ENCODE measurements at regions of chr14 and their contacts with region 1.

Region 1: DNA sequence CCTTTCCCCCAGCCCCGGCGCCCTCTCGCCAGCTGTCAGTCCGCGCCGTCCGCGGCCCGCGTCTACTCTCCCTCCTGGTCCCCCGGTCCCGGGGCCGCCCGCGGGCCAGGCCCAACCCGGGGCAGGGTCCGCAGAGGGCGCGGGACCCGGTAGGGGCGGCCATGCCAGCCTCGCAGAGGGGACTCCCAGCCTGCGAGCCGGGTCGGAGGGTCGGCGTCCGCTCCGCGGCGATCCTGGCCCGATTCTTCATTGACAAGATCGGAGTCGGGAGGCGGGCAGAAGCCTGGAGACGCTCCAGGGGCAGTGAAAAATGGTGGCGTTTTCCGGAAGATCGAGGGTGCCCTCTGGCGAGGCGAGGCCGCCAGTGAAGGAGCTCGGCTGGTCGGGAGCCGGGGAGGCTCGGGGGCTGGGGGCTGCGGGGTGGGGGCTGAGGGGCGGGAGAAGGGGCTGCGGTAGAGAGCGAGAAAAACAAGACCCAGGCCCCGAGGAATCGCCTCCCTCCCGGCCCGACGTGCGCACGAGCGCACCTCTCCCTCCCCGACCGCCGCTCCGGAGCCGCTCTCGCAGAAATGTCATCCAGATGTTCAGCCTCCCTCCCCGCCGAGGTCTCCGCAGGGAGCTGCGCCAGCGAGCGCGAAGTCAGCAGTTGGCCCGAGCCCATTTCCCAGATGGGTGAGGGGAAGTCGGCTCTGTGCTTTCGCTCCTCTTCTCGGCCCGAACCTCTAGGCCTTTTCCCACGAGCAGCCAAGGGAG is 647 bp upstream of the TGFB3 start:
- DNase-seq: peak; percentile 71 to 96
- H3K4me3 ChIP-seq: peak overlapping the region; percentile 85
- H3K27ac ChIP-seq: no peak overlapping the region
- H3K4me1 ChIP-seq: peaks cover 37% of the 10 kb centered on the region
- H3K27me3 ChIP-seq: no peaks in the 10 kb centered on the region
- CTCF ChIP-seq: peak; percentile 79

Region 2: DNA sequence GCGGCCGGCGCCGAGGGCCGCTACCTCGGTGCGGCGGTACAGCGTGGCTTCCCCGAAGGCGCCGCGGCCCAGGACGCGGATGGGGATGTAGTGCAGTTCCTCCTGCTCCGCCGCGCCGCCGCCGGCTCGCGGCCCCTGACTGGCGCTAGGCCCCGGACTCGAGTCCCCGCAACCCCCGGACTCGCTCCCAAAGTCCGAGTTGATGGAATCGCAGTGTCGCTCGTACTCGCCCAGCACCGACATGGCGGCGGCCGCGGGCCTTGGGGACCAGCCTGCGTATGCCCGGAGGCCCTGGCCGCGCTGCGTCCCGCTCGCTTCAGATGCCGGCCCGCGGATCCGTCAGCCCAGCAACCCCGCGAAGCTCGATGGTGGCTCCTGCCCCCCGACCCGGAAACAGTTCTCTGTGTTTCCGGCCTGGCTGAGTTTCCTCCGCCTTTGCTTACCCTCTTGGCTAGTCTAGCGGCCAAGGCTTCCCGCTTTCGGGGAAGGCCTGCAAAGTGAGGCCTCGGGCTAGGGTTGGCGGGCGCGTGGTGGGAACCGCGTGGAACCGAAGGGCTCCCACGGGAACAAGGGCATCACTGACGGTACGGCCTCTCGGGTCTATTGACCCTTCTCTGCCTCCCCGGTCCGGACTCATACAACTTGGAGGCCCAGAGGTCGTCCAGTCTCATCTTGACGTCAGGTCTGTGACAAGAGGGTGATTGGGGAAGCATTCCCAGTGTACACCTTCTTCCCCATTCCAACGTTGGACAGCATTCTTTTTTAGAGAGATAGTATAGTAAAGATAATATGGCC is 855.6 kb before region 1 on chr14 and contains the start of gene NEK9:
- CTCF ChIA-PET with region 1: no interaction called
- POLR2A ChIA-PET with region 1: interaction called, 5 read pairs
- intact Hi-C with region 1: loop called (anchors 2 kb)
- DNase-seq: peak; percentile 88 to 98
- H3K4me3 ChIP-seq: peak within 1 kb of the TSS; percentile 64
- H3K27ac ChIP-seq: peak within 1 kb of the TSS; percentile 85
- H3K4me1 ChIP-seq: peaks cover 47% of the 10 kb centered on the region
- H3K27me3 ChIP-seq: no peaks in the 10 kb centered on the region
- CTCF ChIP-seq: no peak
- total RNA-seq, gene NEK9: 170 and 174 TPM in 2 replicates

Region 3: GRCh38 chr14:75522224-75522982 is 460.0 kb before region 1 on chr14 and contains the start of gene BATF:
- CTCF ChIA-PET with region 1: interaction called, 16 read pairs
- POLR2A ChIA-PET with region 1: interaction called, 5 read pairs
- intact Hi-C with region 1: no loop called
- DNase-seq: peak; percentile 69 to 74
- H3K4me3 ChIP-seq: peak within 1 kb of the TSS; percentile 68
- H3K27ac ChIP-seq: peak within 1 kb of the TSS; percentile 93
- H3K4me1 ChIP-seq: peaks cover 60% of the 10 kb centered on the region
- H3K27me3 ChIP-seq: no peaks in the 10 kb centered on the region
- CTCF ChIP-seq: no peak
- total RNA-seq, gene BATF: 55.7 and 79.0 TPM in 2 replicates

Region 4: DNA sequence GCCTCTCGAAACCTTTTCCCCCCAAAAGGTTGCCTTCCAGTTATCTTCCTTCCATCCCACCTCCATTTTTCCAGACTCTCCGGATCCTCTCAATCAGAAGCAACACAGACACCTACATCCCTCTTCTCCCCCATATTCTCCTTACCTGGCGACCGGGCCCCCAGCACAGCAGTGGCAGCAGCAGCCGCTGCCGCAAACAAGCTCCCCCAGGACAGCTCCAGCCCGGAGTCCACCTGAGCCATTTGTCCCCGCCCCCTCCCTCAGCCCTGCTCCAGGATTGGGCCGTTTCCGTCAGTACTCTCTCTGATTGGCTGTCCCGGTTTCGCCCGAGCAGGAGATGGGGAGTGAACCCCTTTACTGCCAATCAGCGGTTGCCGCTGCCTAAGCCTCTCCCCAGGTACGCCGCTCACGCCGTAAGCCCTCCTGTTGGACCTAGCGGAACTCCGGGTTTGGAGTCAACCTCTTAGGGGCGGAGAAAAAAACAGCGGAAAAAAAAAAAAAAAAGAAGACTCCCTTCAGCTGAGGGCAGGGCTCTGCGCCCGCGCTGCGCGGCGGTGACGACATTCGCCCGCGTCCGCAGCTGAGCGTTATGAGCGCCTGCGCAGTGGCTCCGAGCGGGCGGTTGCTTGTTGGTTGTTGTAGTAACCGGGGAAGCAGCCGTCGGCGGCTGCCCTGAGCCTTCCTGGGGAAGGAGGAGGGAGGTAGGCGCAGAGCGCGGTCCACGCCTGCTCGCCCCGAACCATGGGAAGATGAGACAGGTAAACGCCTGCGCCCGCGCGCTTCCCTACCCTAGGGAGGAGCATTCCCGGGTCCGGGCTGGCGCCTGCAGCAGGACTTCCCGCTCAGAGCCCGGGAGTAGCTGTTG is 321.6 kb before region 1 on chr14 and contains the starts of genes ERG28 and TTLL5:
- CTCF ChIA-PET with region 1: interaction called, 17 read pairs
- POLR2A ChIA-PET with region 1: no interaction called
- intact Hi-C with region 1: loop called (anchors 5 kb)
- DNase-seq: peak; percentile 97 to 99
- H3K4me3 ChIP-seq: peak within 1 kb of the TSS; percentile 99
- H3K27ac ChIP-seq: peak within 1 kb of the TSS; percentile 64
- H3K4me1 ChIP-seq: peaks cover 9% of the 10 kb centered on the region; the same call in 1 of the 2 replicates
- H3K27me3 ChIP-seq: no peaks in the 10 kb centered on the region
- CTCF ChIP-seq: no peak
- total RNA-seq, gene ERG28: 25.2 and 32.5 TPM in 2 replicates
- total RNA-seq, gene TTLL5: 60.3 and 75.3 TPM in 2 replicates

Region 5: DNA sequence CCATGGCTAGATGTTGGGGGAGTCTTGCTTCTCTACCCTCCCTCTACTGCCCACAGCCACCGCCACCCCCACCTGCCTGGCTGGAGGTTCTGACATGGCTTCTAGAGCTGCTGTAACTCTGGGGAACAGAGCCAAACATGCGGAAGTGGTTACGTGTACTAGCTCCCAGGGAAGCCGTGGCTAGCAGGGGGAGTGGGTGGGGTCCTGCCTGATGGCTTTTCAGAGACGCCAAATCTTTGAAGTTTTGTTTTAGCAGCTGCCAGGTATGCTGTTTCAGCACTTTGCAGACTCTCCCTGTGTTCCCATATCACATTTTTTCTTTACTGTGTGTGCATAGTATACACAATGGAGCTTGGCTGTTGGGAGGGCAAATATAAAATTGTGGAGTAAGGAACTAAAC is 151.0 kb before region 1 on chr14:
- CTCF ChIA-PET with region 1: interaction called, 11 read pairs
- POLR2A ChIA-PET with region 1: no interaction called
- intact Hi-C with region 1: no loop called
- DNase-seq: peak; percentile 93 to 94
- H3K4me3 ChIP-seq: peak overlapping the region; percentile 29; the same call in 1 of the 2 replicates
- H3K27ac ChIP-seq: peak overlapping the region; percentile 86
- H3K4me1 ChIP-seq: peaks cover 42% of the 10 kb centered on the region
- H3K27me3 ChIP-seq: no peaks in the 10 kb centered on the region
- CTCF ChIP-seq: no peak

Region 6: DNA sequence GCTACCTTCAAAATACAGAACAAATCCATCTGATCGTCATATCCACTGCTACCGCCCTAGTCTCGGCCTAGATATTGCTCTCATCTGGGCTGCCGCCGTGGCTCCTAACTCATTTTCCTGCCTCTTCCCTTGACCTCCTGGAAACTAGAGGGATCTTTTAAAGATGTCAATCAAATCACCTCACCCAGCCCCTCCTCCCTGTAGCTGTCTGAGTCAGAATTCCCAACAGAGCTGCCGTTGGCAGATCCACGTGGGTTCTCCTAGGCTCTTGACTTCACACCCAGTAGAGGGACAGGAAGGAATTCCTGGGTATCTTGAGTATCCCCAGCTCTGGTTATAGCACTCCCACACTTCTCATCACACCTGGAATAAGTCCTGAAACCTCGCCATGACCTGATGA is 12.6 kb before region 1 on chr14:
- CTCF ChIA-PET with region 1: interaction called, 5 read pairs
- POLR2A ChIA-PET with region 1: interaction called, 18 read pairs
- intact Hi-C with region 1: no loop called
- DNase-seq: no peak
- H3K4me3 ChIP-seq: no peak overlapping the region
- H3K27ac ChIP-seq: no peak overlapping the region
- H3K4me1 ChIP-seq: no peaks in the 10 kb centered on the region
- H3K27me3 ChIP-seq: no peaks in the 10 kb centered on the region
- CTCF ChIP-seq: no peak